Sigmoid colon (tissue), 7 donors: ENCODE measurements at regions of chr7 and their contacts with region 1.

Region 1: GRCh38 chr7:74449809-74450397 is 3.8 kb upstream of the GTF2IRD1 start:
- DNase-seq: no peak
- H3K4me3 ChIP-seq: no peak overlapping the region
- H3K27ac ChIP-seq: no peak overlapping the region
- H3K4me1 ChIP-seq: peaks cover 2 to 26% (median 22%) of the 10 kb centered on the region in 4 donors
- H3K27me3 ChIP-seq: no peaks in the 10 kb centered on the region
- CTCF ChIP-seq: peak; percentile 61 to 88 (median 84)
- EP300 ChIP-seq: no peak
- POLR2A ChIP-seq: no peak

Region 2: GRCh38 chr7:74479961-74480829 is 30.3 kb after region 1 on chr7:
- intact Hi-C with region 1: loop called (anchors 1 kb)
- DNase-seq: peak; percentile 96
- H3K4me3 ChIP-seq: peak overlapping the region; percentile 10 to 45 (median 37)
- H3K27ac ChIP-seq: peak overlapping the region; percentile 87 to 95 (median 94)
- H3K4me1 ChIP-seq: peaks cover 0 to 88% (median 79%) of the 10 kb centered on the region in 4 donors
- H3K27me3 ChIP-seq: no peaks in the 10 kb centered on the region
- CTCF ChIP-seq: peak in 1 of 4 experiments; percentile 14
- EP300 ChIP-seq: peak; percentile 84 to 95 (median 89)
- POLR2A ChIP-seq: peak; percentile 10 to 20

Region 3: GRCh38 chr7:74502181-74502891 is 52.4 kb after region 1 on chr7:
- intact Hi-C with region 1: loop called (anchors 5 kb)
- DNase-seq: peak; percentile 91
- H3K4me3 ChIP-seq: no peak overlapping the region
- H3K27ac ChIP-seq: peak overlapping the region; percentile 41 to 78 (median 71)
- H3K4me1 ChIP-seq: peaks cover 0 to 43% (median 30%) of the 10 kb centered on the region in 4 donors
- H3K27me3 ChIP-seq: no peaks in the 10 kb centered on the region
- CTCF ChIP-seq: no peak
- EP300 ChIP-seq: peak in 1 of 4 donors; percentile 42
- POLR2A ChIP-seq: no peak

Region 4: DNA sequence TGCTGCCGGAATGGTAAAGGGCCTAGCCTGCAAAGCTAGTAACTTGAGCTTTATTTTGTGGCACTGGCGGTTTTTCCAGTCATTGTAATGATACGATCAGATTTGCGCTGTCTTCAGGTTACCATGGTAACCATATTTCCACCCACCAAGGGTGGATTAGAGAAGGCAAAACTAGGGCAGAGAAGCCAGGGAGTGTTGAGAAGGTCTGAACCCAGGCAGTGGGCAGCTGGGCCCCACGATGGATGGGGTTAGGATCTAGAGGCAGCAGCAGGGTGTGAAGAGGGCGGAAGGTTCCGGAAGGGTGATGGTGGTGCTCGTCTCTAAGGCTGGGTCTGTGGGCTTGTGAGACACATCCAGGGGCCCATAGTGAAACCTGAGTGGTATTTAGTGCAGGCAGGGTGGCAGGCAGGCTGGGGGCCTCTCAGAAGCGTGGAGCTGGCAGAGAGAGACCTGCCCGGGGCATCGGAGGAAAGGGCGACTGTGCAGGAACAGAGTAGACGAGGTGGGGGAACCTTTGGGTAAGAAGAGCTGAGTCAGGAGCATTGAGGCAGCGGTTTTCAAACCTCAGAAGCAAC is 119.7 kb after region 1 on chr7:
- intact Hi-C with region 1: loop called (anchors 5 kb)
- DNase-seq: no peak
- H3K4me3 ChIP-seq: no peak overlapping the region
- H3K27ac ChIP-seq: no peak overlapping the region
- H3K4me1 ChIP-seq: no peaks in the 10 kb centered on the region
- H3K27me3 ChIP-seq: no peaks in the 10 kb centered on the region
- CTCF ChIP-seq: no peak
- EP300 ChIP-seq: no peak
- POLR2A ChIP-seq: no peak

Region 5: DNA sequence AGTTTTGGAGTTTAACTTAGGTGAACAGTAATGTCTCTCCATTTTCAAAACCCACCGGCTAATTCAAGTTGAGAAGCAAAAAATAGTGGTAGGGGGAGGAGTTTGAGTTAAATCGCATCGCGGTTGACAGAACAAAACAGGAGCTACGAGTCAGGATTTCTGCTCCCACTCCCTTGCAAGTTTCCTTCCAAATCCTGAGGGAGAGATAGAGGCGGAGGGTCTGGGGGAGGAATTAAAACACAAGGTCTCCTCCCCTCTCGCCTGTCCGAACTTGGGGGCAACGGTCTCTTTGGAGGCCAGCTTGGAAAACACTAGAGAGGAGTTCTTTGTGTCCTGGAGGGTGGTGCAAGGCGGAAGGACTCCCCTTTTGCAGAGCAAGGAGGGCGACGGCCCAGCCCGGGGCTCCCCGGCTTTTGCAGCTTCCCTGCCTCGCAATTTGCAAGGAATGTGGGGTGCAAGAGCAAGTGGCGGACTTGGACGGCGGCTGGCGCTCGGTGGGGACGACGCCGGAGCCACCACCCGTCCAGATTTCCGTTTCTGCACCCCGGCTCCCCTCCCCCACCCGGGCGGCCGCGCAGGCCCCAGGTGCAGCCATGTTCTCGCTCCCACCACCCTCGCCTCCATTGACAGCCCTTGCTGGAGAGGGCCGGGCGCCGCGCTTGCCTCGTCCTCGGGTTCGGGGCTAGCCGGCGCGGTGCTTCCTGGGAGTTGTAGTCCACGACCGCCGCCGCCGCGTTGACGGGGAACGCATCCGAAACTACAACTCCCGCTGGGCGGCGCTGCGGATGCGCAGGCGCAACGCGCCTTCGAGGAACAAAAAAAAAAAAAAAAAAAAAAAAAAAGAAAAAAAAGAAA is 207.2 kb after region 1 on chr7:
- intact Hi-C with region 1: loop called (anchors 2 kb)
- DNase-seq: peak; percentile 99
- H3K4me3 ChIP-seq: peak overlapping the region; percentile 81 to 100 (median 100)
- H3K27ac ChIP-seq: peak overlapping the region; percentile 99 to 100 (median 99)
- H3K4me1 ChIP-seq: peaks cover 0 to 49% (median 42%) of the 10 kb centered on the region in 4 donors
- H3K27me3 ChIP-seq: no peaks in the 10 kb centered on the region
- CTCF ChIP-seq: no peak
- EP300 ChIP-seq: peak in 1 of 4 donors; percentile 34
- POLR2A ChIP-seq: peak; percentile 52 to 53